ENCODE measurements at regions of chr4 and their contacts with region 1.

Region 1: GRCh38 chr4:150010525-150011126 is 67.6 kb upstream of the DCLK2 start:
- DNase-seq: peak; percentile 56

Region 2: DNA sequence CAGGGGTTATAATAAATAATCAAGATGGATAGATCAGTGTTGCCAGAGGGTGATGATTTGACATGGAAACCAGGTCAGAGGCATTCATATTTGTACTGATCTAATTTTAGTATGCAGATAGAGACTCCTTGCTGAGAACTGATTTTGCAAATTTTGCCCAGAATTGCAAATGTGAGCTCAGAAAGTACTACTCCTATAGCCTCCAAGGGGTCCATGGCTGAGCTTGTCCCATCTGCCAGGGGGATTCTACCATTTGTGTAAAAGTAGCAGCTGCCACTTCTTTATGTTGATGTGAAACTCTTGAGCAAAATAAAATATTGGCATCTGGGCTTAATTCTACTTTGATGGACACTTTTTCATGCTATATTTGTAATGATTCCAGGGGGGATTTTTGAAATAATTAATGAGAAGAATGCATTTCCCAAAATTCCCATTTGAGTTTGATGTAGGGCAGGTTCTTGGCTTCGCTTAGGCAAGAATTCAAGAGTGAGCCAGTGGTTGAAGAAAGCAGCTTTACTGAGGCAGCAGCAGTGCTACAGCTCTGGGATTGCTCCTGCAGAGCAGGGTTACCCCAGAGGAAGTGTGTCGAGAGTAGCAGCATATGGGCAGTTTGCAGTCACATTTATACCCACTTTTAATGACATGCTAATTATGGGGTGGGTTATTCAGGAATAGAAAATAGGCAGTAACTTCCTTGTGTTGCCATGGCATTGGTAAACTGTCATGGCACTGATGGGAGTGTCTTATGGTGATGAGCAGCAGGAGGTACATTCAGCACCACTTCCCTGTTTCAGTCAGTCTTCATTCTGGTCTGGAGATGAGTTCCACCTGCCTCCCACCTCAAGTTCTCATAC is 28.9 kb after region 1 on chr4:
- CTCF ChIA-PET with region 1: no interaction called
- POLR2A ChIA-PET with region 1: no interaction called
- DNase-seq: no peak

Region 3: GRCh38 chr4:150209140-150209829 is 198.7 kb after region 1 on chr4:
- CTCF ChIA-PET with region 1: interaction called, 27 read pairs
- POLR2A ChIA-PET with region 1: interaction called, 3 read pairs
- DNase-seq: peak; percentile 51

Region 4: GRCh38 chr4:150242820-150243458 is 232.3 kb after region 1 on chr4:
- CTCF ChIA-PET with region 1: interaction called, 22 read pairs
- POLR2A ChIA-PET with region 1: no interaction called
- DNase-seq: peak; percentile 65

Measured in HEK293T (cell line).